ENCODE measurements at regions of chr9 and their contacts with region 1.

Region 1: GRCh38 chr9:124532897-124533296 is 25.7 kb upstream of the NR5A1 start:
- DNase-seq: no peak
- H3K4me3 ChIP-seq: no peak overlapping the region
- H3K27ac ChIP-seq: no peak overlapping the region
- H3K27me3 ChIP-seq: peaks cover 3% of the 10 kb centered on the region
- CTCF ChIP-seq: no peak

Region 2: DNA sequence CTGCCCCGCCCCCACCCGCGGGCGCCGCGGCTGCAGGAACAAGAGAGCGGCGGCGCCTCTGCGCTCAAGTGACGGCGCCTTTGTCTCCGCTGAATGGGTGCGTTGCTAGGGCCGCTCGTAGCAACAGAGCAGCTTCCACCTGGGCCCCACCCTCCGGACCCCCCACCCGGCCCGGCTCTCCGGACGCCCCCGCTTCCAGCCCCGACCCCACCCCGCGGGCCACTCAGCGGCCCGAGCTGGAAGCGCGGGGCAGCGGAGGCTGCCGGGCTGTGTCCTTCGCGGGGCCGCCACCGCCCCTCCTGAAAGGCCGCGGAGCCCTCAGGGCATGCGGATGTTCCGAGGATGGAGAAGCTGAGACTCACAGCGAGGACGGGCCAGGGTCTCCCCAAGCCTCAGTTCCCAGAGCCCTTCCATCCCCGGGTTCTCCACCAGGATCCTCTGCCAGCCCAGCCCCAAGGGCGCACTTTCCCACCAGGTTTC is 55.1 kb before region 1 on chr9:
- CTCF ChIA-PET with region 1: no interaction called
- POLR2A ChIA-PET with region 1: interaction called, 15 read pairs
- DNase-seq: no peak
- H3K4me3 ChIP-seq: no peak overlapping the region
- H3K27ac ChIP-seq: no peak overlapping the region
- H3K27me3 ChIP-seq: peaks cover 71% of the 10 kb centered on the region
- CTCF ChIP-seq: no peak

Measured in AG04450 (cell line).